HCT116 (cell line): ENCODE measurements at regions of chr7 and their contacts with region 1.

Region 1: GRCh38 chr7:123154231-123154860 is 45.4 kb downstream of the SLC13A1 start:
- DNase-seq: peak; percentile 90
- ATAC-seq: peak; percentile 99
- H3K4me3 ChIP-seq: no peak overlapping the region
- H3K27ac ChIP-seq: no peak overlapping the region
- H3K4me1 ChIP-seq: no peaks in the 10 kb centered on the region
- H3K27me3 ChIP-seq: no peaks in the 10 kb centered on the region
- CTCF ChIP-seq: peak; percentile 58 to 85 (median 73); a peak in 5 of 6 replicates
- POLR2A ChIP-seq: no peak
- RAD21 ChIP-seq: peak; percentile 86

Region 2: DNA sequence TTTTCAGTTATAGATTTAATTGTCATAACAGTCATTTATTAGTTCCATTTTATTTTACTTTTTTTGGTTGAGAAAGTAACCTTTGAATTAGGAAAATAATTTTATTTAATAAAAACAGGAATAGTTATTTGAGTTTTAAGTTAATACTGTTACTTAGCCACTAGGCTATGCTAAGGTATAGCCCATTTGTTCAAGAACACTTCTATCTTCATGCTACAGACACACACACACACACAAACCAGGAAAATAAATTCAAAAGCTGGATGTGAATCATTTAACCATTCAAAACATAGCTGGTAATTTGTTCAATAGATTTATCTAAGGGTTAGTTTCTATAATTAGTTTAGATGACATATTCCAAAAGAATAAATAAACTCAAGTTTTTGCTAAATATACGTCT is 603.8 kb before region 1 on chr7:
- CTCF ChIA-PET with region 1: no interaction called
- POLR2A ChIA-PET with region 1: no interaction called
- RAD21 ChIA-PET with region 1: no interaction called
- intact Hi-C with region 1: loop called (anchors 2 kb)
- DNase-seq: no peak
- ATAC-seq: no peak
- H3K4me3 ChIP-seq: no peak overlapping the region
- H3K27ac ChIP-seq: no peak overlapping the region
- H3K4me1 ChIP-seq: no peaks in the 10 kb centered on the region
- H3K27me3 ChIP-seq: no peaks in the 10 kb centered on the region
- CTCF ChIP-seq: 0 out of 6 replicates have a peak, but pooled peaks of 2 of the 3 experiments have one; percentile 12 to 17
- POLR2A ChIP-seq: no peak
- RAD21 ChIP-seq: peak; percentile 48

Region 3: DNA sequence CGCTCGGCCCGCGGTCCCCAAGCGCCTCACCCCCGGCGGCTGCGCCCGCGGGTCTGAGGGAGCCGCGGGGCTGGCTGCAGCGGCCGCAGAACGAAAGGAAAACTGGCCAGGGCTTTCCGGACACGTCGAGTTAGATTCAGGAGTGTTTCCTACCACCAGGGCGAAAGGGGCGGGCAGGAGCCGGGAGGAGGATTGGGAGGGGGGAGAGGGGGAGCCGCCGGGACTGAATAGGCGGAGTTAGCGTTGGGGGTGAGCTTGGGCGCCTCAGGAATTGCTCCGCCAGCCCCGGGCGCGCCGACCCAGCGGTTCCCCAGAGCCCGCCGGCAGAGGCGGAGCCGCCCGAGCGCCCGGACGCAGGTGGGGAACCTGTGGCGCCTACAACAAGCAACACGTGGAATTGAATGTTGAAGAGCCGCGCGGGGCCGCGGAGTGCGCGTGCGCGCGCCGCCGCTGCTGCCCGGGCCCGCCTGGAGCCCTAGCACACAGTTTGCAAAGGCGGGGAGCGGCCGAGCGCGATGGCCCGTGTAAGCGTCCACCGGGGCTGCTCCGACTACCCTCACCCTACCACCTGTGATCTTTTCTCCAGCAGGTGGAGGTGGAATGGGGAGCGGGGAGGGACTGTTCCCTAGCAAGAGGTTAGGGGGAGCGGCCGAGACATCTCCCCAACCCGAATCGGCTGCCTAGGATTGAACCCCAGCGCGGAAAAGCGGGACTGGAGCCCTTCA is 267.8 kb before region 1 on chr7 and contains the start of gene CADPS2:
- CTCF ChIA-PET with region 1: no interaction called
- POLR2A ChIA-PET with region 1: no interaction called
- RAD21 ChIA-PET with region 1: no interaction called
- intact Hi-C with region 1: loop called (anchors 5 kb)
- DNase-seq: peak; percentile 71
- ATAC-seq: peak; percentile 85
- H3K4me3 ChIP-seq: peak within 1 kb of the TSS; percentile 73 to 76
- H3K27ac ChIP-seq: peak within 1 kb of the TSS; percentile 85
- H3K4me1 ChIP-seq: peaks cover 5 to 21% of the 10 kb centered on the region in 2 experiments; a peak in 3 of 4 replicates
- H3K27me3 ChIP-seq: no peaks in the 10 kb centered on the region
- CTCF ChIP-seq: peak in 1 of 3 experiments; percentile 27; a peak in 1 of 6 replicates
- POLR2A ChIP-seq: peak; percentile 35
- RAD21 ChIP-seq: no peak
- total RNA-seq, gene CADPS2: 7.5 TPM

Region 4: DNA sequence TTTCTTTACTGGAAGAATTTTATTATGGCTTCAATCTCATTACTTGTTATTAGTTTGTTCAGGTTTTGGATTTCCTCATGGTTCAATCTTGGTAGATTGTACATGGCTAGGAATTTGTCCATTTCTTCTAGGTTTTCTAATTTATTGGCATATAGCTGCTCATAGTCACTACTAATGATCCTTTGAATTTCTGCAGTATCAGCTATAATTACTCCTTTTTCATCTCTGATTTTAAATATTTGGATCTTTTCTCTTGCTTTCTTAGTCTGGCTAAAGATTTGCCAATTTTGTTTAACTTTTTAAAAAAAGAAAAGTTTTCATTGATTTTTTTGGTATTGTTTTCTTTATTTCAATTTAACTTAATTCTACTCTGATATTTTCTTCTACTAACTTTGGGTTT is 13.8 kb before region 1 on chr7:
- CTCF ChIA-PET with region 1: interaction called, 10 read pairs
- POLR2A ChIA-PET with region 1: no interaction called
- RAD21 ChIA-PET with region 1: no interaction called
- intact Hi-C with region 1: no loop called
- DNase-seq: no peak
- ATAC-seq: no peak
- H3K4me3 ChIP-seq: no peak overlapping the region
- H3K27ac ChIP-seq: no peak overlapping the region
- H3K4me1 ChIP-seq: no peaks in the 10 kb centered on the region
- H3K27me3 ChIP-seq: no peaks in the 10 kb centered on the region
- CTCF ChIP-seq: no peak
- POLR2A ChIP-seq: no peak
- RAD21 ChIP-seq: no peak

Region 5: DNA sequence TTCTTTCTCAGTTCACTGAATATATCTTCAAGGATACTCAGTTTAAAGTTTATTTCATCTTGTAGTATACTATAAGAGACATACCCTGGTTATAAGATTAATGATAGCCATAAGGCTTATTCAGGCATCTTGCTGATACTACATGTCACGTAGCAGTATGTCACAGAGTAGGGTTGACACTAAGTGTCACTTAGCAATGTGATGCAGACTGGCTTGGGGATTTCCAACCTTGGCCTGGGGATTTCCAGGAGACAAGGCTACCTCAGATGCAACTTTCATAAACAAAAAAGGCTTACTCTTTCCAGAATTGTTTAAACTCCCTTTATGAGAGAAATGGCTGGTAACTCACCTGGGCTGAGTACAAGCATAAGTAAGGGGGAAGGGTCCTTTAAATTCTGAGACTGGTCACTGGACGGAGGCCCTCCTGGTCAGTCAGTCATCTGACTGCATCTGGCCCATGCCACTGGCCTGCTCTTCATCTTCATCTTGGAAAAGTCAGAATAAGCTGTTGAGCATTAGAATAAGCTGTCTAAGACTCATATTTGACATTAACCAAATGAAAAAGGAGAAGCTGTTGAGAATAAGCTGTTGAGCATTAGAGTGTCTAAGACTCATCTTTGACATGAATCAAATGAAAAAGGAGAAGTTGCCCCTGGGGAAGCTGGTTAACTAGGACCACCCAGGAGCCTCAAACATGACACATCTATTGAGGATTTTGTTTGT is 35.9 kb after region 1 on chr7:
- CTCF ChIA-PET with region 1: no interaction called
- POLR2A ChIA-PET with region 1: no interaction called
- RAD21 ChIA-PET with region 1: no interaction called
- intact Hi-C with region 1: no loop called
- DNase-seq: no peak
- ATAC-seq: no peak
- H3K4me3 ChIP-seq: no peak overlapping the region
- H3K27ac ChIP-seq: no peak overlapping the region
- H3K4me1 ChIP-seq: no peaks in the 10 kb centered on the region
- H3K27me3 ChIP-seq: no peaks in the 10 kb centered on the region
- CTCF ChIP-seq: no peak
- POLR2A ChIP-seq: no peak
- RAD21 ChIP-seq: no peak

Region 6: DNA sequence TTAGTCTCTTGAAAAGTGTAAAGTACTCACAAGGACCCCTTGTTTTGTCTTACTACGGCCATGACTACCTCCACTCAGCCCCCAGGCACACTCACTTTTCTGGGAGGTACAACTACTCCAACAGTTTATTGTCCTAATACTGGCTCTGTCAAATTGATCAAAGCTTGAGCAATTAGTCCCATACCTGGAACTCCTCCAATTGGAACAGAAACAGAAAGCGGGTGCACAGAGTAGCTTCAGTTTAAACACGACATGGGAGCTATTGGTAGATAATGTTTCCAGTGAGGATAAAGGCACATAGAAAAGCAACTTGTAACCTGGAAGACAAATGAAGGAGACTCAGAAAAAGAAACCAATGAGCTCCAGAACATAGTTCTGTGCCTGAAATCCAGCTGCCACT is 1619.0 kb after region 1 on chr7:
- CTCF ChIA-PET with region 1: no interaction called
- POLR2A ChIA-PET with region 1: no interaction called
- RAD21 ChIA-PET with region 1: no interaction called
- intact Hi-C with region 1: no loop called
- DNase-seq: no peak
- ATAC-seq: no peak
- H3K4me3 ChIP-seq: no peak overlapping the region
- H3K27ac ChIP-seq: no peak overlapping the region
- H3K4me1 ChIP-seq: no peaks in the 10 kb centered on the region
- H3K27me3 ChIP-seq: no peaks in the 10 kb centered on the region
- CTCF ChIP-seq: no peak
- POLR2A ChIP-seq: no peak
- RAD21 ChIP-seq: no peak